Ascending aorta (tissue), 2 donors: ENCODE measurements at regions of chr1 and their contacts with region 1.

Region 1: GRCh38 chr1:225428068-225428880 is 436 bp upstream of the LBR start:
- DNase-seq: peak; percentile 80 to 96
- H3K4me3 ChIP-seq: peak overlapping the region; percentile 94 to 98
- H3K27ac ChIP-seq: peak overlapping the region; percentile 52 to 89
- H3K4me1 ChIP-seq: peaks cover 3 to 26% of the 10 kb centered on the region in 2 donors
- H3K27me3 ChIP-seq: no peaks in the 10 kb centered on the region
- CTCF ChIP-seq: no peak

Region 2: DNA sequence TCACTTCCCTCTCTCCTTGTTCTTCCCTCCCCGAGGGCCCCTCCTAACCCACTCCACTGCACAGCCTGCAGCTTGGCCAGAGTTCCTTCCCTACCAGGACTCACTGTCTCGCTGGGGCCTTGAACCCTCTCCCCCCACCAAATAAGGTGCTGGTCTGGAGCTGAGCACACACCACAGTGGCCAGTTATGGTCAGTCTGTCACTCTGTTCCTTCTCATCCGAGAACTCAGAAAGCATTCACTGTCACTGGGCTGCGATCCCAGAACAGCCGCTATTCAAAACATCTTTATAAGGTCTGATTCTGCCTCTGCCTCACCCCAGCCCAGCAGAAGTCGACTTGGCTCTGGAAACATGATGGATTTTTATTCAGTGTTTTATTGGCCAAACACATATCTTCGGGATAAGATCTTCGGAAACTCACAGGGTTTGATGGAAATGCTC is 19.4 kb after region 1 on chr1:
- intact Hi-C with region 1: loop called (anchors 2 kb)
- DNase-seq: no peak
- H3K4me3 ChIP-seq: peak overlapping the region; percentile 9 to 47
- H3K27ac ChIP-seq: peak overlapping the region; percentile 37 to 49
- H3K4me1 ChIP-seq: peaks cover 0 to 9% of the 10 kb centered on the region in 2 donors
- H3K27me3 ChIP-seq: no peaks in the 10 kb centered on the region
- CTCF ChIP-seq: no peak

Region 3: GRCh38 chr1:225923692-225924555 is 495.6 kb after region 1 on chr1 and contains the start of gene PYCR2:
- intact Hi-C with region 1: loop called (anchors 5 kb)
- DNase-seq: peak; percentile 87 to 98
- H3K4me3 ChIP-seq: peak within 1 kb of the TSS; percentile 80 to 84
- H3K27ac ChIP-seq: peak within 1 kb of the TSS; percentile 85 to 95
- H3K4me1 ChIP-seq: peaks cover 6 to 19% of the 10 kb centered on the region in 2 donors
- H3K27me3 ChIP-seq: no peaks in the 10 kb centered on the region
- CTCF ChIP-seq: no peak
- total RNA-seq, gene PYCR2: 126 TPM

Region 4: GRCh38 chr1:225999227-225999911 is 571.1 kb after region 1 on chr1 and contains the start of gene SDE2:
- intact Hi-C with region 1: loop called (anchors 1 kb)
- DNase-seq: peak; percentile 98 to 100
- H3K4me3 ChIP-seq: peak within 1 kb of the TSS; percentile 84 to 96
- H3K27ac ChIP-seq: peak within 1 kb of the TSS; percentile 96 to 97
- H3K4me1 ChIP-seq: peaks cover 0 to 27% of the 10 kb centered on the region in 2 donors
- H3K27me3 ChIP-seq: no peaks in the 10 kb centered on the region
- CTCF ChIP-seq: no peak
- total RNA-seq, gene SDE2: 12.3 TPM

Region 5: DNA sequence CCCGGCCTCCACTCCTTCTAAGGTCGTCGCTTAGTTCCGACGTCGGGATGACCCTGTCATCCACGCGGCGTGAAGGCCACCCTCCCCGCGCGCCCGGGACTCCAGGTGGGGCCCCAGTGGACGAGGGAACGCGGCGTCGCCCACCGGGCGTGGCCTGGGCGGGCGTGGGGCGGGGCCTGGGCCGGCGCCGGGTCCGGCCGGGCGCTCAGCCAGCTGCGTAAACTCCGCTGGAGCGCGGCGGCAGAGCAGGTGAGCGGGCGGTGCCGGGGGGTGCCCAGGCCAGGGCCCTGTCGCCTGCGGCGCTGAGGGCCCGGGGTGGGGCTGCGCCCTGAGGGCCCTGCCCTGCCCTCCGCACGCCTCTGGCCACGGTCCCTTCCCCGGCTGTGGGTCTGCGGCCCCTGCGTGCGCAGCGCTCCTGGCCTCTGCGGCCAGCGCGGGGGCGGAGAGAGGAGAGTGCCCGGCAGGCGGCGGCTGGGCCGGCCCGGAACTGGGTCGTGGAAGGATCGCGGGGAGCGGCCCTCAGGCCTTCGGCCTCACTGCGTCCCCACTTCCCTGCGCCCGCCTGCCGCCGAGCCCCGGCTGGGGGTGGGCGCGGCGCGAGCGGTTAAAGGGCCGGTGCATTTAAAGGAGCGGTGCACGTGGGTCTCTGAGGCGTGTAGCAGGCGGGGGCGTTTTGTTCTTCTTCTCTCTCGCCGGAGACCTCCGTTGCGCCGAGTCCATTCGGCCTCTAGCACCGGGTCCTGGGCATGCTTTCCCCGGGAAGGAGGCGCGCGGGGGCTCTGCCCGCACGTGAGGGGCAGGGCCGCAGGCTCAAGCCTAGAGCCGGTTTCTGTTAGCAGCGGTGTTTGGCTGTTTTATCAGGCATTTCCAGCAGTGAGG is 1442.4 kb after region 1 on chr1 and contains the start of gene PSEN2:
- intact Hi-C with region 1: loop called (anchors 5 kb)
- DNase-seq: peak; percentile 24 to 86
- H3K4me3 ChIP-seq: peak within 1 kb of the TSS; percentile 60 to 90
- H3K27ac ChIP-seq: peak within 1 kb of the TSS; percentile 61 to 79
- H3K4me1 ChIP-seq: peaks cover 0 to 9% of the 10 kb centered on the region in 2 donors
- H3K27me3 ChIP-seq: no peaks in the 10 kb centered on the region
- CTCF ChIP-seq: peak; percentile 5 to 35 (median 16)
- total RNA-seq, gene PSEN2: 26.5 TPM